Right ventricle myocardium superior (tissue), 1 donor: ENCODE measurements at regions of chr3 and their contacts with region 1.

Region 1: DNA sequence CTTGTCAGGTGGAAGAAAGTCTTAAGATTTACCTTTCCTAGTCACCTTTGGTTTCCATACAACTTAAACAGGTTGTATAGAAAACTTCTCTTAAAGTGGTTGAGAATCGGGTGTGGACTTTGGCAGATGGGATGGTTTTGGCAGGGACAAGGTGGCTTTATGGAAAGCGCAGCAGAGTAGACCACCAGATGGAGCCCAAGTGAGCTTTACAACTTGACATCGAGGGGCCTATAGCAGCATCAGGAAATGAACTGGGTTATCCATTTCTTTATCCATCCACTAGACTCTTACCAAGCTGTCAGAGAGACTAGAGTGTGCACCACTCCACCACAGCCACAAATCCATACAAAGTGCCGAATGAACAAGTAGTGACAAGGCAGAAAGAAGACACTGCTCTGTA is 85.3 kb upstream of the MBNL1 start:
- DNase-seq: peak; percentile 44
- ATAC-seq: peak; percentile 83

Region 2: DNA sequence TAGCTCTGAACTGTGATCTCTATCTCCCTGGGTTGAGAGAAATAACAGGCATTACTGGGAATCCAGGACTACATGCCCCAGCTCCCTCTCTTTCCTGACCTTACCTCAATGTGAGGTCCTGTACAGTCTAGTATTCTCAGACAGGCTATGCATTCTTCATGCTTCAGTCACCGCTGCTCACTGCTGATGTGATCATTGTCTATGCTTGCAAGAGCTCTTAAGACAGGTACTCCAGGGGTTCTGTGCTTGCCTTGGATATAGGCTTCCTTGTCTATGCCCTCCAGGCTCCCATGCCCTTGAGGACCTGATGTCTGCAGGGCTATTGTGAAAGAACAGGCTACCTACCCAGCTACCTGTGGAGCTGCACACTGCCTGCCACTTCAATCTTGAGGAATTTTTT is 268.8 kb after region 1 on chr3:
- intact Hi-C with region 1: loop called (anchors 5 kb)
- DNase-seq: no peak
- ATAC-seq: peak; percentile 42